Lower leg skin (tissue), 4 donors: ENCODE measurements at regions of chr21 and their contacts with region 1.

Region 1: DNA sequence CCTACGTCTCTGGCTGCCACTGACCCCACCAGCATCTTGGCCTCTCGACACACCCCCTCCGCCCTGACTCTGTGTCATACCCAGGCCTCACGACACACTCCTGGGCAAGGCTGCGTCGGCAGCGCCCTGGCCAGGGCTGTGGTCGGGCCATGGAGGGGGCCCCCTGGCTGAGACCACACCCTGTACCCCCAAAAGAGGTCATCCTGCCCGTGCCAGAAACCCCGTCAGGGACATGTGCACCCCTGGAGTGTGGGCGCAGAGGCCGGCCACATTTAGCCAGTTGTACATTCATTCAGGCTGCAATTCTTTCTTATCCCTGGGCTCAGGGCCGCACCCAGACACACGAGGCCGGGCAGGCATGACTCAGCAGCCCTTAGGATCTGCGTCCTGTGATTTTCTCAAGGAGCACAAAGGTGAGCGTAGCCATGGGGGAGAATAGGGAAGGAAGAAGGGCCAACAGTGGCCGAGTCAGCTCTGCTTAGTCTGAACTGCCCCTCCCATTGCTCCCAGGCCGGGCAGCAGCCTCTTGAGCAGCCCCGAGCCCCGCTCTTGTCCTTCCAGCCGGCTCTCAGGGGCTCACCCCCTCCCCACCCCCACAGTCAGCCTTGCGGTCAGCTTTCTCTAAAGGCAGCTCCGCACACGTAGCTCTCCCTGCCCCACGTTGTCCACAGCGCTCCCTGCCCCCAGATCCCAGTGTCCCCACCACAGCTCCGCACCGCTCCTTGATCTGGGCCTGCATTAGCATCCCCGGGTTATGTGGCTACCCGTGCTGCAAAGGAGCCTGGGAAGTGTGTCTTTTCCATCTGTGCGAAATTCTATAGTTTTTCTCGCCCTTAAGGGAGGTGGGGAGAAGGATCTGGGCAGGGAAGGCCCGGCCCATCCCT is 7.9 kb downstream of the CSTB start:
- DNase-seq: peak; percentile 59 to 91
- H3K4me3 ChIP-seq: no peak overlapping the region
- CTCF ChIP-seq: no peak
- POLR2A ChIP-seq: no peak

Region 2: GRCh38 chr21:42973991-42974831 is 794.0 kb before region 1 on chr21 and contains the start of gene PKNOX1:
- intact Hi-C with region 1: loop called (anchors 10 kb)
- DNase-seq: peak; percentile 98 to 100
- H3K4me3 ChIP-seq: peak within 1 kb of the TSS; percentile 62
- CTCF ChIP-seq: no peak
- POLR2A ChIP-seq: no peak
- total RNA-seq, gene PKNOX1: 4.9 to 13.8 (median 8.8) TPM

Region 3: DNA sequence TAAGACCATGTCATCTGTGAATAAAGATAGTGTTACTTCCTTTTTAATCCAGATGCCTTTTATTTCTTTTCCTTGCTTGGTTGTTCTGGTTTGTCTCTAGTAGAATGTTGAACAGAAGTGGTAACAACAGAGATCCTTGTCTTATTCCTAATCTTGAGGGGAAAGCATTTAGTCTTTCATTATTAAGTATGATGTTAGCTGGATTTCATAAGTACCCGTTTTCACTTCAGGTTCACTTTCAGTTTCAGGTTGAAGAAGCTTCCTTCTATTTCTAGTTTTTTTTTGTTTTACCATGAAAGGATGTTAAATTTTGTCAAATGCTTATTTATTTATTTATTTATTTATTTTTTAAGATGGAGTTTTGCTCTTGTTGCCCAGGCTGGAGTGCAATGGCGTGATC is 74.5 kb after region 1 on chr21:
- intact Hi-C with region 1: loop called (anchors 2 kb)
- DNase-seq: no peak
- H3K4me3 ChIP-seq: no peak overlapping the region
- CTCF ChIP-seq: no peak
- POLR2A ChIP-seq: no peak